ENCODE measurements at regions of chr17 and their contacts with region 1.

Region 1: DNA sequence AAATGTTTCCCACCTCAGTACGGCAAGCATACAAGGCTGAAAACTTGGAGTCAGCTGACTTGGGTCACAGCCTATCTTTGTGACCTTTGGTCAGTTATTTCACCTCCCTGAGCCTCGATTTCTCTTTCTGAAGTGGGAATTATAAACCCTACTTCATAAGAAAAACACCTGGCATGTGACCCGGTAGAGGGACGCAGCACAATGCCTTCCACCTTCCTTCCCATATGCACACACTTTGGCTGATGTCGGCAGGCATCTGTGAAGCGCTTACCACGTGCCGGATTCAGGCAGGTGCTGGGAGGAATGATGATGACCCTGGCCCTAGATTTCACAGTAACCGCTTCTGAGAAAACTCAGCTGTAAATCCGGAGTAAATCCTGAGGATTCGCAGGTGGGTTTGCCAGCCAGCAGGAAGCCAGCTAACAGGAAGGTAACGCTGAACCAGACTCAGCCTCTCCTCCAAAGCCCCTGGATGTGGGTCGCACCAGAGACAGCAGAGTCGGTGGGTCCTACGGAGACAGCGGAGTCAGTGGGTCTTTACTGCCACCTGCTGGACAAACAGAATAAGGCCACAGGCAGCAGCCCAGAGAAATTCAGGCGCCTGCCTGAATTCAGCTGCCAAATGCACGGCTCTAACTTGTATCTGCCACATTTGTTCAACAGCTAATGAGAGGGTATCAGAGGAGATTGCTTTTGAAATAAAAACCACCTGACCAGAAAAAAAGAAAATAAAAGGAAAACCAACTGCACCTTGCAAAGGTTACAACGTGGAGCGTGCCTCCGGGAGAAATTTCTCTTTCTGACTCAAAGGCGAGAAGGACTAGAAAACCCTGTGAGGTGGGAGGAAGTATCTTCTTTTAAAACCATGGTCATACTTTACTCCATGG is 16.6 kb downstream of the COPRS start:
- DNase-seq: peak; percentile 80
- H3K4me3 ChIP-seq: no peak overlapping the region
- H3K27ac ChIP-seq: no peak overlapping the region
- H3K4me1 ChIP-seq: peaks cover 8% of the 10 kb centered on the region
- CTCF ChIP-seq: peak; percentile 99

Region 2: DNA sequence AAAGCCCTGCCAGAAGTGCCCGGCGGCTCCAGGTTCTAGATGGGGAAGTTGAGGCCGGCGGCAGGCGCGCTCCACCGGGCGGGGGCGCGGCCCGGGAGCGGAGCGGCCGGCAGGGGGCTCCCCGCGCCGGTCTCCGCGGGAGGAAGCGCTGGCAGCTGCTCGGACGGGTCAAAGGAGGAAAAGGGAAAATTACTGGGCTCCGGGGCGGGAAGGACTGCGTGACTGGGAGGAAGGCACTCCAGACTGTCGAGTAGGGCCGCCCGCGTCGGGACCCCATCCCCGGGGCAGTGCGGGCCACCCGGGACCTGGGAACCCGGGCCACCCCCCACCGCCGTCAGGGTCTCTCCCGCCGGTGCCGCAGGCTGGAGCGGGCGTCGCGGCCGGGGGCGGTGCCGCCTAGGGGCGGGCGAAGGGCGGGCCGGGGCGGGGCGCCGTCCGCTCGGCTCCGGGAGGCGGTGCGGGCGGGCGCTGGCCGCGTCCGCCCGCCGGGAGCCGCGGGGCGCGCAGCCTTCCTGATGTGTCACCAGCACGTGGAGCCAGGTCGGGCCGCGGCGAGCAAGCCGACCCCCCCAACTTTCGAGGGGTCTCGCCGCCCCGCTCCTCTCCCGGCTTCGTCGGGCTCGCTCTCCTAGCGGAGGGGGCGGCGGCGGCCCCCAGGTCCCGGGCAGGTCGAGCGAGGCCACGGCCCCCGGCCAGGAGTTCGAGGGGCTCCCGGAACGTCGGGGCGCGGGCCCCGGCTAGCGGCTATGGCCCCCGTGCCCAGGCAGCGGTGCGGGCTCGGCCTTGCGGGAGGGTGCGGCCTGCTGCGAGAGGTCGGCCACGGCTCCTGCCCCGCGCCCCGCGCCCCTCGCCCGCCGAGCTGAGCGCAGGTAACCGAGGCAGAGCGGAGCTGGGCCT is 283.4 kb before region 1 on chr17:
- CTCF ChIA-PET with region 1: no interaction called
- POLR2A ChIA-PET with region 1: interaction called, 3 read pairs
- intact Hi-C with region 1: loop called (anchors 1 kb)
- DNase-seq: peak; percentile 75
- H3K4me3 ChIP-seq: peak overlapping the region; percentile 69
- H3K27ac ChIP-seq: no peak overlapping the region
- H3K4me1 ChIP-seq: peaks cover 42% of the 10 kb centered on the region
- CTCF ChIP-seq: peak; percentile 95